ENCODE measurements at regions of chr4 and their contacts with region 1.

Region 1: DNA sequence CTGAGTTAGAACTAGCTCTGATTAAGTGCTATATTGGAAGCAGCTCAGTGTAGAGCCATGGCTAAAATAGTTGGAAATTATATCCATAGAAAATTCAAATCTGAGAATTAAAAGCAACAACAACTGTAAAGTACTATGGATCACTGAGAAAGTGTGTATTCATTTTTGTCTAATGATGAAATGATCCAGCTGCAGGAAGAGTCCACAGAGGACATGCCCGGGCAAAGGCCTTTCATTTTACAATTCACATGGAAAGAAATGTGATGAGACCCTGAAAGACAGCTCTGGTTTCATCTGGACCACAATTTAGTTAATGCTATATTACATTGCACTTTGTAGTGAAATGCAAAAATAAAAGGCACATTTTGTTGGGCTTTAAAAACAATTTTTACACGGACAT is 196.8 kb upstream of the FAT1 start:
- DNase-seq: peak; percentile 45
- H3K4me3 Mint-ChIP-seq: no peak overlapping the region
- H3K27ac Mint-ChIP-seq: peak overlapping the region; percentile 99
- H3K4me1 Mint-ChIP-seq: peaks cover 16% of the 10 kb centered on the region
- H3K27me3 Mint-ChIP-seq: no peaks in the 10 kb centered on the region
- CTCF ChIP-seq: no peak

Region 2: DNA sequence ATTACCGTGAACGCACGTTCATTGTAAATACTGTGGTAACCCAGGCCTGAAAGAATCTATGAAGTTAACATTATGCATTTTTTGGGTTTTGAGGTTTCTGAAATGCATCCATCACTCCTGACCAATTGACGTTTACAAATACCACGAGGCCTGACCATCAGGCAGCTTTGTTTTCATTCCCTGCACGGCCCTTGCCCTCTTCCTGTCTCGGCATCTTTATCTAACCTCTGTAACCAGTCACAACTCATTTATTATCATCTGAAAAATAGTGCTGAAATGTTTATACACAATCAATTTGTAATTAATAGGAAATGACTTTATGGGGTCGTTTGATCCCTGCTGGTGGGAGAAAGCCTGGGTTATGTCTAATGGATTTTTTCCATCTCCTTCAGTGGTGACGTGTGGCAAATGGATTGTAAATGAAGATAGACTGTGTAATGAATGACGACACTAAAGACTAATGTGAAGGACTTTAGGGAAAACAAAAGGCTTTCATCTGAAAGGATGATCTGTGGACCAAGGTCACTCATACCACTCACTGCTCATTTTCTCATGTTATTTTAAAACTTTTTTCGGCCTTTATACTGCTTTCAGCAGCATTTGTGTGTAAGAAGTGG is 1005.8 kb before region 1 on chr4:
- CTCF ChIA-PET with region 1: no interaction called
- POLR2A ChIA-PET with region 1: no interaction called
- intact Hi-C with region 1: no loop called
- DNase-seq: no peak
- H3K4me3 Mint-ChIP-seq: no peak overlapping the region
- H3K27ac Mint-ChIP-seq: no peak overlapping the region
- H3K4me1 Mint-ChIP-seq: peaks cover 5% of the 10 kb centered on the region
- H3K27me3 Mint-ChIP-seq: no peaks in the 10 kb centered on the region
- CTCF ChIP-seq: no peak

Region 3: DNA sequence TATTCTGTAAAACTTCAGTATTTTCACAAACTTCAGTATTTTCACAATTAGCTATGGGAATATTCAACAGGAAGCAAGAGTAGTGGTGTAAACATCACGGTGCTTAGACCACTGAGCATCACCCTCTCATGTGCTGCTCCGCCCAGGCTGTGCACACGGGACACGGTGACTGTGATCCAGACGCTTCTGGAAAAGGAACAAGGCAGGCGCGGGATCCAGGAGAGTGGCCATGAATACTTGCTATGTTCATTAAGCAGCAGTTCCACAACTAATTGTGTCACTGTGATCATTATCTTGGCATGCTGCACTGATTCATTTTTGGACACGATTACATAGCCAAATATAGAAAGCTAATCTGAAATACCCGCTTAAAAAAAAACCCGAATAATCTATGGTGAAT is 177.2 kb before region 1 on chr4:
- CTCF ChIA-PET with region 1: no interaction called
- POLR2A ChIA-PET with region 1: no interaction called
- intact Hi-C with region 1: no loop called
- DNase-seq: no peak
- H3K4me3 Mint-ChIP-seq: no peak overlapping the region
- H3K27ac Mint-ChIP-seq: no peak overlapping the region
- H3K4me1 Mint-ChIP-seq: no peaks in the 10 kb centered on the region
- H3K27me3 Mint-ChIP-seq: no peaks in the 10 kb centered on the region
- CTCF ChIP-seq: no peak

Region 4: DNA sequence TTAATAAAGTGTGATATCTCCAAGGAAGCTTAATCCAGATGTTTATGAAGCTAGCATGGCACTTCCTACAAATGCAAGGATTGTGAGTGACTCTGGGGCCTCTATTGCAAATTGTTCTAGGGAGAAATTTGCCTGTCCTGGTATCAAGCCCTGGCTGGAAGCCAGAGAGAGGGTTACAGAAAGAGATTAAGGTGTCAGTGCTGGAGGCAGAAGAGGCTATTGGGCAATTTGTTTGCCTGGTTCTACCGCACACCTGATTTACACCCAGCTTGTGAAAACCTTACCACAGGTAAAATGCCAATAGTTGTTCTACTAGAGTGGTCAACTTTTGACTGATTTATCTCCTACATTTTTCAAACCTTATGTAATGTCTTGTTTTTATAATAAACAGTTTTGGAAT is 10.1 kb before region 1 on chr4:
- CTCF ChIA-PET with region 1: no interaction called
- POLR2A ChIA-PET with region 1: interaction called, 15 read pairs
- intact Hi-C with region 1: no loop called
- DNase-seq: peak; percentile 71
- H3K4me3 Mint-ChIP-seq: no peak overlapping the region
- H3K27ac Mint-ChIP-seq: no peak overlapping the region
- H3K4me1 Mint-ChIP-seq: peaks cover 11% of the 10 kb centered on the region
- H3K27me3 Mint-ChIP-seq: no peaks in the 10 kb centered on the region
- CTCF ChIP-seq: no peak

Measured in MCF 10A (cell line).